Activated CD4-positive, alpha-beta T cell treated with anti-CD3 and anti-CD28 coated beads, Interleukin-2, amount 10 ng/mL, durations not matched to agents 7 days and 5 days (primary cell): ENCODE measurements at regions of chr10 and their contacts with region 1.

Region 1: DNA sequence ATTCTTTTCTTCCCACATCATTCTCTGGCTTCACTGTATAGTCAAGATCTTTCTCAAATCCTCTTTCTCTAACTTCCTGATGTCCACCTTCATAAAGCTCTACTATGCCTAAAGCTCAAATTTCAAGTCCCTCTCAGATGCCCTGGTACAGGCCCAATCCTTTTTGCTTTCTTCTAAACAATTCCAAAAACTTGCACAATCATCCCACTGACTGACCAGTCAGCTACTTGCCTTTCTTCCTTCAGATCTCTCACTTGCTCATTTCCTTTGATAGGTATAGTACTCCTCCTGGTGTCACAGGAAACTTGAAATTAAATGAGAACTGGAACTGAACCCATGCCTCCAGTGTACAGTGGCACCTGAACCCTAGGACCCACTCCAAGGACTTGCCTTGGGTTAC is 18.2 kb downstream of the SEC31B start:
- DNase-seq: no peak
- H3K4me3 Mint-ChIP-seq: no peak overlapping the region
- H3K27ac Mint-ChIP-seq: peak overlapping the region; percentile 22
- H3K4me1 Mint-ChIP-seq: peaks cover 92% of the 10 kb centered on the region
- H3K27me3 Mint-ChIP-seq: no peaks in the 10 kb centered on the region

Region 2: DNA sequence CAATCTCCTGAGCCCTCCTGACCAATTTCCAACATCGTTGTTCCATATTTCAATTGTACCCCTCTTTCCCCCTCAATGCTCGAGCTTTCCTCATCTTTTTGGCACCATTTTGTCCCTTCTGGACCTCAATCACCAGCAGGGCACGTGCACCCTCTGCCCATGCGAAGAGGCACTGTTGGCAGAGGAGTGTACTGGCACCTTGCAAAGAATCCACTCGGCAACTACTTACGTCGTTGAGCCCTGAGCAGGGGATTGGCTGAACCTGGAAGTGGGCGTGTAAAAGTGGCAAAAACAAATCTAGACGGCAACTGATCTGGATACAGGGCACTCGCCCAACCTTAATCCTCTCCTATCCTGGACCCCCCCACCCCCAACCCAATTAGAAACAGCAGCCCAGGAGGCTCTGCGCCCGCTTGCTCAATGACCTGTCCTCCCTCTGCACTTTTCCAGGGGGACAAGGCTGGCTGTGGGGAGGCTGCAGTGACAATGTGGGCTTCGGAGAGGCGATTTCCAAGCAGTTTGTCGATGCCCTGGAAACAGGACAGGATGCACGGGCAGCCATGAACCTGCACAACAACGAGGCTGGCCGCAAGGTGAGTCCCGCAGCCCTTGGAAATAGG is 19.9 kb before region 1 on chr10:
- CTCF ChIA-PET with region 1: interaction called, 59 read pairs
- POLR2A ChIA-PET with region 1: interaction called, 3 read pairs
- DNase-seq: peak; percentile 92
- H3K4me3 Mint-ChIP-seq: peak overlapping the region; percentile 74
- H3K27ac Mint-ChIP-seq: peak overlapping the region; percentile 70
- H3K4me1 Mint-ChIP-seq: peaks cover 33% of the 10 kb centered on the region
- H3K27me3 Mint-ChIP-seq: peaks cover 13% of the 10 kb centered on the region

Region 3: GRCh38 chr10:100489396-100489795 is 12.0 kb before region 1 on chr10:
- CTCF ChIA-PET with region 1: interaction called, 59 read pairs
- POLR2A ChIA-PET with region 1: no interaction called
- DNase-seq: no peak
- H3K4me3 Mint-ChIP-seq: no peak overlapping the region
- H3K27ac Mint-ChIP-seq: no peak overlapping the region
- H3K4me1 Mint-ChIP-seq: peaks cover 21% of the 10 kb centered on the region
- H3K27me3 Mint-ChIP-seq: no peaks in the 10 kb centered on the region